Activated T-helper 1 cell treated with anti-CD3 and anti-CD28 coated beads, Interleukin-12 subunit alpha, Interleukin-12 subunit beta, Interleukin-2, Interleukin-4 antibody, amounts not matched to agents 30 ng/mL and 10 ng/mL and 1 ng/mL, durations not matched to agents 14 hours and 24 hours and 36 hours (primary cell): ENCODE measurements at regions of chr14 and their contacts with region 1.

Region 1: DNA sequence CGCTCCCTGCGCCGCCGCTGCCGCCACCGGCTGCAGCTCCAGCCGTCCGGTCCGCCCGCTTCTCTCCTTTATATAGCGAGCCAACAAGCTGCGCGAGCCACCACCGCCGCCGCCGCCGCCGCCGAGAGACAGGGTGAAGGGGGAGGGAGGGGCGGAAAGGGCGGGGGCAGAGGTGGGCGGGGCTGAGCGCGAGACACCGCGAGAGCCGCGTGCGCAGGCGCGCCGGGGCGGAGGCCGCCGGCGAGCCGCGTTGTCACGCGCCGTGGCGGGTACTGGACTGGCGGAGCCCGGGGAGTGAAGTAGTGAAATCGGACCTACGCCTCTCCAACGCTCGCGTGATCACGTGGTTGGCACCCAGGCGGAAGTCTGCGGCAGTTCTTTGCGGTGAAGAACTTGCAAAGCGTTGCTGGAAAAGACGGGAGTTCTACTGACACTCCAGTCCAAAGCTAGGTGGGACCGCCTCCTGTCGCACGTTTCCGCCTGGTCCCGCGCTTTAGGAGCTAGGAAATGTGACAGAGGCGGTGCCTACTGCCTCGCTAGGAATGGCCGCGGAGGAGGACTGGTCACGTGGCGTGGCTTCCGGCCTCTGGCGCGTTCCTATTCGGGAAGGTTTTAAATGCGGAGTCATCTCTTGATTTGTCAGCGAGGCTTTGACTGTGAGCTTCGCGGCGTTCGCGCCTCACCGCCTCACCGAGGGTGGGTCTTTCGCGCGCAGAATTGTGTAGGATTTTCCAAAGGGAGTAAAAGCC is at the start of gene GTF2A1:
- DNase-seq: peak; percentile 93
- H3K4me3 Mint-ChIP-seq: peak within 1 kb of the TSS; percentile 99
- H3K27ac Mint-ChIP-seq: peak within 1 kb of the TSS; percentile 99
- H3K4me1 Mint-ChIP-seq: peaks cover 46% of the 10 kb centered on the region
- H3K27me3 Mint-ChIP-seq: no peaks in the 10 kb centered on the region
- total RNA-seq, gene GTF2A1: 41.0 and 42.7 TPM in 2 replicates

Region 2: GRCh38 chr14:80941241-80942182 is 279.5 kb before region 1 on chr14 and contains the start of gene CEP128:
- intact Hi-C with region 1: loop called (anchors 1 kb)
- DNase-seq: peak; percentile 79
- H3K4me3 Mint-ChIP-seq: peak within 1 kb of the TSS; percentile 88
- H3K27ac Mint-ChIP-seq: peak within 1 kb of the TSS; percentile 88
- H3K4me1 Mint-ChIP-seq: peaks cover 30% of the 10 kb centered on the region
- H3K27me3 Mint-ChIP-seq: no peaks in the 10 kb centered on the region
- total RNA-seq, gene CEP128: 18.2 and 22.0 TPM in 2 replicates

Region 3: DNA sequence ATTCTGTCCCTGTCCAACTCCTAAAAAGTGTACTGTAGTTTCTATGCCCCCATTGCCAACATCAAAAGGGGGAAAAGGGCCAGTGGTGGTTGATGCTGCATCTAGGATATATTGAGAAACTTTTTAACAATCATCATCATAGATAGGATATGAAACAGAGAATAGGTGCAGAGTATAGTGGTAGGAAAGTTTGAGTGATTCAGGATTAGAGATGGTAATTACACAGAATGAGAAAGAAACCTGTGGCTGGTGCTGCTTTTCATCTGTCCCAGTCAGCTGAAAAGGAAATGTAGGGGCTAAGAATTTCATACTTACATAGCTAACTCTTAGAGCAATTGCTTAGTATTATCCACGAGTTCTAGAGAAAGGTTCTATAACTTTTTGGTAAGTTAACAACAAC is 67.8 kb before region 1 on chr14:
- intact Hi-C with region 1: loop called (anchors 1 kb)
- DNase-seq: no peak
- H3K4me3 Mint-ChIP-seq: no peak overlapping the region
- H3K27ac Mint-ChIP-seq: peak overlapping the region; percentile 4
- H3K4me1 Mint-ChIP-seq: peaks cover 17% of the 10 kb centered on the region
- H3K27me3 Mint-ChIP-seq: peaks cover 2% of the 10 kb centered on the region

Region 4: GRCh38 chr14:81193924-81194633 is 26.9 kb before region 1 on chr14:
- intact Hi-C with region 1: loop called (anchors 2 kb)
- DNase-seq: peak; percentile 5
- H3K4me3 Mint-ChIP-seq: no peak overlapping the region
- H3K27ac Mint-ChIP-seq: peak overlapping the region; percentile 26
- H3K4me1 Mint-ChIP-seq: peaks cover 47% of the 10 kb centered on the region
- H3K27me3 Mint-ChIP-seq: no peaks in the 10 kb centered on the region

Region 5: DNA sequence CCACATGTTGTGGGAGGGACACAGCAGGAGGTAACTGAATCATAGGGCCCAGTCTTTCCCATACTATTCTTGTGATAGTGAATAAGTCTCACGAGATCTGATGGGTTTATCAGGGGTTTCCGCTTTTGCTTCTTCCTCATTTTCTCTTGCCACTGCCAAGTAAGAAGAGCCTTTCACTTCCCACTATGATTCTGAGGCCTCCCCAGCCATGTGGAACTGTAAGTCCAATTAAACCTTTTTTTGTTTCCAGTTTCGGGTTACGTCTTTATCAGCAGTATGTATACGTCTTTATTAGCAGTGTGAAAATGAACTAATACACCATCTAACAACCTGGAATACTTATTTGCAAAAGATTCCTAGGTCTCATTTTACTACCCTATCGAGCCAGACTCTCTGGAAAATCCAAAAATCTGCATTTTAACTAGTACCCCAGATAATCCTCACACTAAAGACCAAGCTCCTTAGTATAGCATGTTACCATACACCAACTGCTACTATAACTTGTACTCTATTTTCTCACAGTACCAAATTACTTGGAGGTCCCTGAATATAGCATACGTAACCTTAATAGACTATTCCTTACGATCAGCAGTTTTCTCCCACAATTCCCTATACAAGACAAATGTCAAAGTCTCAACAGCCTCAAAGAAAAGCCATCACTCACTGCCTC is 11.7 kb before region 1 on chr14:
- intact Hi-C with region 1: no loop called
- DNase-seq: no peak
- H3K4me3 Mint-ChIP-seq: no peak overlapping the region
- H3K27ac Mint-ChIP-seq: no peak overlapping the region
- H3K4me1 Mint-ChIP-seq: peaks cover 35% of the 10 kb centered on the region
- H3K27me3 Mint-ChIP-seq: no peaks in the 10 kb centered on the region

Region 6: DNA sequence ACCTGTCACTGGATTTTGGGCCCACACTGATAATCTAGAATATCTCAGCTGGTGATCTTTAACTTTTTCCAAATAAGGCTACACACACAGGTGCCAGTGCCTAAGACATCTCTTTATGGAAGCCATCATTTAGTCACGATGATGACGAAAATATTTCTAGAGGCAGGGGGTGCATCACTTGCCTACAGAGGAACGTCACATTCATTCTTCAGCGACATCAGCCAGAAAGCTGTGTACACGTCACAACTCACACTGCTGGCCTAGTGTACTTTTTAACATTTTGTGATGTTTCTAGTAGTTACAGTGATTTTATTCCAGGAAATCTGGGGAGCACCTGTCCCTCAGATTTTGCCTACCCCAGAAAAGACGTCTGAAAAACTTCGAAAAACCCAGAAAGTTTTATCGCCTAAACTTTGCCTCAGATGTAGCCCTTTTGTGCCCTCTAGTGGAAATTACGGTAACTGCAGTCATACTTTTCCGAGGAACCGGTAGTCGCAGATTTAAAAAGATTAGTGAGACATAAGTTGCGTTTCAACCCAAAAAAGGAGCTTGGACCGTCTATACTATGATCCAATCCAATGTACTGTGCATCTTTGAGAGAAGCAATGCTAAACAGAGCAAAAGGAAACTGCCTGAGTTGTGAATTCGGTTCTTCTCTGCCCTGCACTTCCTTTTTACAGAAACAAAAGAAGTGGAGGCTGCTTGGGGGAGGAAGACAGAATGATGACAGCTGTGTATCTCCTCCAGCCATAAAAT is 243.4 kb after region 1 on chr14:
- intact Hi-C with region 1: loop called (anchors 2 kb)
- DNase-seq: peak; percentile 57
- H3K4me3 Mint-ChIP-seq: peak overlapping the region; percentile 77
- H3K27ac Mint-ChIP-seq: peak overlapping the region; percentile 63
- H3K4me1 Mint-ChIP-seq: peaks cover 12% of the 10 kb centered on the region
- H3K27me3 Mint-ChIP-seq: no peaks in the 10 kb centered on the region

Region 7: GRCh38 chr14:81519200-81520011 is 298.4 kb after region 1 on chr14:
- intact Hi-C with region 1: no loop called
- DNase-seq: no peak
- H3K4me3 Mint-ChIP-seq: peak overlapping the region; percentile 50
- H3K27ac Mint-ChIP-seq: peak overlapping the region; percentile 88
- H3K4me1 Mint-ChIP-seq: peaks cover 45% of the 10 kb centered on the region
- H3K27me3 Mint-ChIP-seq: no peaks in the 10 kb centered on the region

Region 8: DNA sequence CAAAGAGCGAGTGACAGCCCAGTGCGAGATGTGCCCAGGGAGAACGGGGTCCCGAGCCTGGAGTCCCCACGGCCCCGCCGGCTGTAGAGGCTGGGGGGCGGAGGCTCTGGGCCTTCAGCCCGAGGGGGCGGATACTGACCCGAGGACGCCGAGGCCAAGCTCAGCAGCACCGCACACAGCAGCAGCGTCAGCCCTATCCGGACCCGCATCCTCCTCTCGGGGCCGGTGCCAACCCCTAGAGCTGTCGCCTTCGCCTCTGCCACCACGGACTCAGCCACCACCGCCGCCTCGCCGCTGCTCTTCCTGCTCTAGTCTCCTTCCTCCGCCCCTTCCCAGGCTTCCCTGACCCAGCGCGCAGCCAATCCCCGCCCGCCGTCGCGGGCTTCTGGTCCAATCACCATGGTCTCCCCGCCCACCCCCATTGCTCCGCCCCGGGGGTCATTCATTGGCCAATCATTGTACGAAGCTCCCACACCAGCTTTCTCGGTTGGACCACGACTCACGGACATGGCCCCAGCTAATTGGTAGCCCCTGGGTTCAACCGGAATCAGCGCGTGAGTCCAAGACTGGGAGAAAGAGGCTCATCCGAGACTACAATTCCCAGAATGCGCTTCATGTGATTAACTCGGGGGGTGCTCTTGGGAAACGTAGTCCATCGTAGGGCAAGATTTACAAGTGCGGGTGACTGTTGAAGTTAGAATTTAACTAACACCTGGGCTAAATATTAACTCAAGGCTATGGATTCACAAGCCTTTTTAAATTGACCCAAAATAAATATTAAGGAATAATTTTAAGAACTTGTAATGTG is 312.7 kb after region 1 on chr14 and contains the start of gene SEL1L:
- intact Hi-C with region 1: loop called (anchors 1 kb)
- DNase-seq: peak; percentile 99
- H3K4me3 Mint-ChIP-seq: peak within 1 kb of the TSS; percentile 95
- H3K27ac Mint-ChIP-seq: peak within 1 kb of the TSS; percentile 59
- H3K4me1 Mint-ChIP-seq: peaks cover 41% of the 10 kb centered on the region
- H3K27me3 Mint-ChIP-seq: peaks cover 6% of the 10 kb centered on the region
- total RNA-seq, gene SEL1L: 55.9 and 56.1 TPM in 2 replicates